Esophagus squamous epithelium (tissue), 5 donors: ENCODE measurements at regions of chr20 and their contacts with region 1.

Region 1: DNA sequence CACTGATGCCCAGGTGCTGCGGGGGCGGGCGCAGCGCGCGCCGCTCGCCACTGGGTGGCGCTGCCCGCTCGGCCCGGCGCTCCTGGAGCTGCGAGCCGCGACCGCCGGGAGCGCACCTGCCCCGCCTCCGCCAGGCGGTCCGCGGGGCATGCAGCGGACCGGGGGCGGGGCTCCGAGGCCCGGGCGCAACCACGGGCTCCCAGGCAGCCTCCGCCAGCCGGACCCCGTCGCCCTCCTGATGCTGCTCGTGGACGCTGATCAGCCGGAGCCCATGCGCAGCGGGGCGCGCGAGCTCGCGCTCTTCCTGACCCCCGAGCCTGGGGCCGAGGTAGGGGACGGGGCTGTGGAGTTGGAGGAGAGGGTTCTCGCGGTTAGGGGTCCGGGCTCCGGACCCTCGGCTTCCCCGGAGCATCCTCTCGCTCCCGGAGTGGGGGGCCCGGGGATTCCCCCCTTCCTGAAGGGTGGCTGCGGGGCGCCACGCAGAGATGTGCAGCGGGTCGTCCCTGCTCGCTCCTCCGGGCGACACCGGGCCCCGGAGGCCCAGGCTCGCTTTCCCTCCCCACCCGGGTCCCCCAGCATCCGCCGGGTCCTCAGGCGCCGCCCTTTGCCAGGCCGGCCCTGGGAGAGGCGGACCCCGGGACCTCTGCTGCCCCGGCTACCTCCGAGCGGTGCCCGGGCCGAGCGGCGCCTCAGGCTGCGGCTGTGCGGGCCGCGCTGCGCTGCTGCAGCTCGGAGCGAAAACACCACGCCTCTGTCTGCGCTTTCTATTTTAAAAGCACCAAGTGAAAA is at the start of gene BCAS4:
- DNase-seq: no peak
- H3K4me3 ChIP-seq: peak within 1 kb of the TSS; percentile 69 to 93 (median 82)
- H3K27ac ChIP-seq: peak within 1 kb of the TSS; percentile 52 to 81 (median 78)
- H3K4me1 ChIP-seq: peaks cover 23 to 48% (median 26%) of the 10 kb centered on the region in 3 donors
- H3K27me3 ChIP-seq: no peaks in the 10 kb centered on the region
- CTCF ChIP-seq: peak in 5 of 6 experiments; percentile 78 to 99 (median 98)
- POLR2A ChIP-seq: no peak
- total RNA-seq, gene BCAS4: 0.18 to 2.3 (median 0.54) TPM

Region 2: GRCh38 chr20:50929299-50930138 is 134.5 kb after region 1 on chr20:
- intact Hi-C with region 1: loop called (anchors 5 kb)
- DNase-seq: peak; percentile 77
- H3K4me3 ChIP-seq: peak overlapping the region; percentile 84 to 91 (median 89)
- H3K27ac ChIP-seq: peak overlapping the region; percentile 90 to 99 (median 99)
- H3K4me1 ChIP-seq: peaks cover 13 to 64% (median 27%) of the 10 kb centered on the region in 3 donors
- H3K27me3 ChIP-seq: no peaks in the 10 kb centered on the region
- CTCF ChIP-seq: peak; percentile 81 to 97 (median 91)
- POLR2A ChIP-seq: no peak